Activated B cell treated with CpG ODN at 0.5 μM for 24 hours (primary cell): ENCODE measurements at regions of chr3 and their contacts with region 1.

Region 1: DNA sequence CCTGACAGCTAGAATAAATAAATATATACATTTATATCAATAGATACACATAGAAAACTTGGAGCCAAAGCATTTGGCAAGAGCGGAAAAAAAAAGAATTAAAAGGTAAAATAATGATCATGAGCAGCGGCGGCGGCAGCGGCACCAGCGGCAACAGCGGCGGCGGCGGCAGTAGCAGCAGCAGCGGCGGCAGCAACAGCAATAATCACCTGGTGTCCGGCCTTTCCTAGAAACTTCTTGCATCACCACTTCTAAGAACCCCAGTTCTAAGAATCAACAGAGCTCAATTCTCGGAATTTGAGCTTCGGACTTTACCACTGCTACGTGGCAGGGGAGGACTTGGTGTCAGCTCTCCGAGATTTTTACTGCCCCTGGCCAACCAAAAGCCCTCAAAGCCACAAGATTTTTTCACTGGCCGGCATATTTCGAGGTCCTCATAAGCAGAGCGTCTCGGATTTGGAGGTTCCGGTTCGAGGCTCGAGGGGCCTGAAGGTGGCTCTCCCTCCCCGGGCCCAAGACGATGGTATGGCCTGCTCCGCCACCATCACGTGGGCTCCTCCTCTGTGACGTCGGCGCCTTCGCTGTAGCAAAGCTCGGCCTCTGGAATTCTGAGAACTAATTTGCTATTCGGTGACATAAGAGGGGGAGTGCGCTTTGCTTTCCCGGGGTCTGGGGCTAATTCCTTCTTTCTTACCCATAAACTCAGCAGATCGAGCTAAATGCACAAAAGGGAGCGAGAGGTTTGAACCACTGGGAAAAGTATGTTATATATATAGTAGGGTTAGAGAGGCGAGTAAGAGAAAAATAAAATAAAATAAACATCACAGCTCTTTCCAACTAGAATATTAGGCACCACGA is at the start of gene BCL6:
- DNase-seq: peak; percentile 77
- ATAC-seq: peak; percentile 60
- H3K4me3 Mint-ChIP-seq: peak within 1 kb of the TSS; percentile 98
- H3K27ac Mint-ChIP-seq: peak within 1 kb of the TSS; percentile 98
- H3K4me1 Mint-ChIP-seq: peaks cover 79% of the 10 kb centered on the region
- H3K27me3 Mint-ChIP-seq: no peaks in the 10 kb centered on the region
- CTCF ChIP-seq: no peak
- total RNA-seq, gene BCL6: 100 and 112 TPM in 2 replicates

Region 2: GRCh38 chr3:187777331-187777941 is 32.0 kb after region 1 on chr3:
- CTCF ChIA-PET with region 1: interaction called, 4 read pairs
- POLR2A ChIA-PET with region 1: interaction called, 10 read pairs
- intact Hi-C with region 1: loop called (anchors 1 kb)
- DNase-seq: peak; percentile 24
- ATAC-seq: peak; percentile 78
- H3K4me3 Mint-ChIP-seq: peak overlapping the region; percentile 58
- H3K27ac Mint-ChIP-seq: peak overlapping the region; percentile 88
- H3K4me1 Mint-ChIP-seq: peaks cover 38% of the 10 kb centered on the region
- H3K27me3 Mint-ChIP-seq: no peaks in the 10 kb centered on the region
- CTCF ChIP-seq: no peak

Region 3: DNA sequence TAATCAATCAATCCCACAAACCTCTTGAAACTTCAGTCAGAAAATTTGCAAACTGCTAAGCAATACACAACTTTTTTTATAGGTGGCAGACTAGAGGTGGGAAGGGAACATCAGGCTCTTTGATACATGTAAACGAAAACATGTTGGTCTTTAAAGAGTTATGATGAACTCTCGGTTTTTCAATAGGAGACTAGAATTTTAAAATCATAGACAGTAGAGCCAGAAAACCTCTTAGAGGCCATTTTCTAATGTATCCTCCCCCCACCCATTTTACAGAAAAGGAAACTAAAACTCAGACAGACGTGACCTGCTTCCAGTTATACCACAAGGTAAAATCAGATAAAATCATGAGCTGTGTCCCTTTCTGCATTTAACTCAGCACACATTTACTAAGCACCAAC is 229.4 kb after region 1 on chr3:
- CTCF ChIA-PET with region 1: interaction called, 15 read pairs
- POLR2A ChIA-PET with region 1: interaction called, 38 read pairs
- intact Hi-C with region 1: loop called (anchors 1 kb)
- DNase-seq: no peak
- ATAC-seq: peak; percentile 10
- H3K4me3 Mint-ChIP-seq: peak overlapping the region; percentile 74
- H3K27ac Mint-ChIP-seq: peak overlapping the region; percentile 81
- H3K4me1 Mint-ChIP-seq: peaks cover 61% of the 10 kb centered on the region
- H3K27me3 Mint-ChIP-seq: peaks cover 5% of the 10 kb centered on the region
- CTCF ChIP-seq: no peak

Region 4: GRCh38 chr3:188212308-188212969 is 467.0 kb after region 1 on chr3:
- CTCF ChIA-PET with region 1: interaction called, 4 read pairs
- POLR2A ChIA-PET with region 1: interaction called, 21 read pairs
- intact Hi-C with region 1: loop called (anchors 1 kb)
- DNase-seq: no peak
- ATAC-seq: no peak
- H3K4me3 Mint-ChIP-seq: no peak overlapping the region
- H3K27ac Mint-ChIP-seq: peak overlapping the region; percentile 88
- H3K4me1 Mint-ChIP-seq: peaks cover 43% of the 10 kb centered on the region
- H3K27me3 Mint-ChIP-seq: no peaks in the 10 kb centered on the region
- CTCF ChIP-seq: no peak

Region 5: DNA sequence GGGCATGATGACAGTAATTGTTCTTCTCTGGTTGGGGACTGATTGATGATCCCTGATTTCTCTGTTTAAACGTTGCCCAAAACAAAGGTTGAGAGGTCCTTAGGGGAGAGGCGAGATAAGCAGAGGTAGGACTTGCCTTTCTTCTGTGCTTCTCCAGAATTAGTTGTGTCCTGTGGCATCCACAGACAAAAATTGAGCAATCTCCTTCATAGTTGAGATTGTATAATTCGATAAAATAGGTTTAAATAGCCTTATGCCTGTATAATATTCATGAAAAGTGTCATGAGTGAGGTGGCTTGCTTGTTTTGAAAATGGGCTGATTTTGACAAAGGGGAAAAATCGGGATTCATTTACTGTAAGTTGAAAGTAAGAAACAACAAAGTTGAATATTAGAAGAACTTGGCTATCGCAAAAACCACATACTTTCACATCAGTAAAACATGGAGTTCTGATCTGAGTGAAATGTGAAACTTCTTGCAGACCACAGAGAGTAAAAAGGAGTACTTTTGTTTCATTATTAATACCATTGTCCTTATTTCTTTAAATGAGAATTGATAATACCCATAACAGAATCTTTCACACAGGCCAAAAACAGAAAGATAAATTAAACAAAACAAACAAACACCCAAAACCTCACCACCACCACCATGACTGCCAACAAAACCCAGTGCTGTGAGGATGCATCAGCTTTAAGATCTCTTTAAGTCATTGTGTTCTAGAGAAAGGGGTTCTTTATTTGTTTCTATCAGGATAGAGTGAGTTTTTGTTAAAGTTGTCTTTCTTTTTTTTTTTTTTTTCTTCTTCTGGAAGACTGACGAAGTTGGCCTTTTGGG is 564.2 kb after region 1 on chr3:
- CTCF ChIA-PET with region 1: interaction called, 10 read pairs
- POLR2A ChIA-PET with region 1: interaction called, 15 read pairs
- intact Hi-C with region 1: loop called (anchors 1 kb)
- DNase-seq: no peak
- ATAC-seq: peak; percentile 78
- H3K4me3 Mint-ChIP-seq: peak overlapping the region; percentile 72
- H3K27ac Mint-ChIP-seq: peak overlapping the region; percentile 91
- H3K4me1 Mint-ChIP-seq: peaks cover 39% of the 10 kb centered on the region
- H3K27me3 Mint-ChIP-seq: no peaks in the 10 kb centered on the region
- CTCF ChIP-seq: no peak

Region 6: GRCh38 chr3:188421836-188422540 is 676.6 kb after region 1 on chr3:
- CTCF ChIA-PET with region 1: interaction called, 13 read pairs
- POLR2A ChIA-PET with region 1: interaction called, 37 read pairs
- intact Hi-C with region 1: loop called (anchors 1 kb)
- DNase-seq: no peak
- ATAC-seq: peak; percentile 95
- H3K4me3 Mint-ChIP-seq: peak overlapping the region; percentile 69
- H3K27ac Mint-ChIP-seq: peak overlapping the region; percentile 98
- H3K4me1 Mint-ChIP-seq: peaks cover 90% of the 10 kb centered on the region
- H3K27me3 Mint-ChIP-seq: no peaks in the 10 kb centered on the region
- CTCF ChIP-seq: no peak

Region 7: GRCh38 chr3:188697127-188697526 is 951.7 kb after region 1 on chr3:
- CTCF ChIA-PET with region 1: interaction called, 5 read pairs
- POLR2A ChIA-PET with region 1: interaction called, 4 read pairs
- intact Hi-C with region 1: loop called (anchors 1 kb)
- DNase-seq: no peak
- ATAC-seq: peak; percentile 80
- H3K4me3 Mint-ChIP-seq: peak overlapping the region; percentile 20
- H3K27ac Mint-ChIP-seq: peak overlapping the region; percentile 86
- H3K4me1 Mint-ChIP-seq: peaks cover 72% of the 10 kb centered on the region
- H3K27me3 Mint-ChIP-seq: no peaks in the 10 kb centered on the region
- CTCF ChIP-seq: no peak